Uterus (tissue), 4 donors: ENCODE measurements at regions of chr5 and their contacts with region 1.

Region 1: GRCh38 chr5:55172051-55172899 is 702 bp downstream of the CDC20B start:
- DNase-seq: peak; percentile 25 to 58
- H3K4me3 ChIP-seq: peak overlapping the region; percentile 3 to 51
- H3K27ac ChIP-seq: no peak overlapping the region
- H3K4me1 ChIP-seq: peaks cover 0 to 8% of the 10 kb centered on the region in 2 donors
- H3K27me3 ChIP-seq: peaks cover 31 to 35% of the 10 kb centered on the region in 2 donors
- CTCF ChIP-seq: peak; percentile 73 to 86 (median 82)
- POLR2A ChIP-seq: no peak

Region 2: DNA sequence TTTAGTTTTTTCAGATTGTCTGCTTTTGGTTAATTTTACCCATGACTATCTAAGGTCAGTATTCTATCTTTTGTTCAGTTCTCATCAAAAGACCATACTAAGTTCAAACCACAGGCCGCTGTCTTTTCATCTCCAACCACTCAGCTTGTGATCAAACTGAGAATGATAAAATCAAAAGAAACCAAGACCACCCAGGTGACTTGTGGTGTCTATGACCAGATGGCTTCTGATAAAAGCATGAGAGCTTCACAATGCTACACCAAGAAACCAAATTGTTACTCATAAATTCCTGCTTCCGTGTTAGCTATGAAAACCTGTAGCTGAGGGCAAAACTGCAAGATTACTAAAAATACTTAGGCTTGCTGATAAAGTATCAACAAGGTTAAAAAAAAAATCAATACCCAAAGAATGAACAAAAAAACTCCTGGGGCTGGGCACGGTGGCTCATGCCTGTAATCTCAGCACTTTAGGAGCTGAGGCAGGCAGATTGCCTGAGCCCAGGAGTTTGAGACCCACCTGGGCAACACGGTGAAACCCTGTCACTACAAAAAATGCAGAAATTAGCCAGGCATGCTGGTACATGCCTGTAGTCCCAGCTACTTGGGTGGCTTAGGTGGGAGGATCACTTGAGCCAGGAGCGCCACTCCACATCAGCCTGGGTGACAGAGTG is 38.1 kb before region 1 on chr5:
- intact Hi-C with region 1: no loop called
- DNase-seq: no peak
- H3K4me3 ChIP-seq: no peak overlapping the region
- H3K27ac ChIP-seq: no peak overlapping the region
- H3K4me1 ChIP-seq: no peaks in the 10 kb centered on the region
- H3K27me3 ChIP-seq: no peaks in the 10 kb centered on the region
- CTCF ChIP-seq: no peak
- POLR2A ChIP-seq: no peak

Region 3: GRCh38 chr5:55226027-55226933 is 54.0 kb after region 1 on chr5:
- intact Hi-C with region 1: loop called (anchors 10 kb)
- DNase-seq: no peak
- H3K4me3 ChIP-seq: peak overlapping the region in 1 of 2 donors; percentile 12
- H3K27ac ChIP-seq: no peak overlapping the region
- H3K4me1 ChIP-seq: peaks cover 0 to 18% of the 10 kb centered on the region in 2 donors
- H3K27me3 ChIP-seq: peaks cover 31 to 94% of the 10 kb centered on the region in 2 donors
- CTCF ChIP-seq: peak in 1 of 4 experiments; percentile 18
- POLR2A ChIP-seq: no peak